B cell (primary cell): ENCODE measurements at regions of chr11 and their contacts with region 1.

Region 1: DNA sequence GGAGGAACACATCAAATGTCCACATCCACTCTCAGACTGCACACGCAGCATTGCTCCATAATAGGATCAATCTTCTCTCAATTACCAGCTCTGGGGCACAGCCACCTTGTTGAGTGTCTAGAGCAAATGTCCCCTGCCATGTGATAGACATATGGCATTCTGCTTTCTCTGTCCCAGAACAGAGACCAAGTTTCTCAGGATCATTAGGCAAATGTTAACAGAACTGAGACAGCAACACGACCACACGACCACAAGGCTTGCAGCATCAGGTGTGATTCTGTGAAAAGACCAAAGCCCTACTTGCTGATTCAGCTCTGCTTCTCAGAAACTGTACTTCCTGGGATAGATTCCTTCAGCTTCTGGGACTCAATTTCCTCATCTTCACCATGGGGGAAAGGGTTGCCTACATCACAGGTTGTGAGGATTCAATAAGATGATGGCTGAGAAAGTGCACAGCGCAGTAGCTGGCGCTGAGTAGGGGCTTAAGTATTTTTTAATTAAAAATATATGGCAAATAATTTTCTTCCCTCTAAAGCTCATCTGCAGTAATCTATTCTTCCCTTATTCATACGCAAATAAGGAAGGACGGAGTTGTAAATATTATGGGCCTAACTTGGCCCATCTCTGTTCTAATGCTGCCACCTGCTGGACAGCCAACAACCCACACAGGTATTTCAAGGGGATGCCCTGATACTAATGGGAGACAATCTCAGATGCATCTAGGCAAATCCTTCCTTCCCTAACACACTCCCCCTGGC is 54.3 kb upstream of the USP47 start:
- DNase-seq: peak; percentile 77
- ATAC-seq: peak; percentile 68
- H3K4me3 ChIP-seq: no peak overlapping the region
- H3K4me3 Mint-ChIP-seq: no peak overlapping the region
- H3K27ac ChIP-seq: no peak overlapping the region
- H3K27ac Mint-ChIP-seq: no peak overlapping the region
- H3K4me1 ChIP-seq: no peaks in the 10 kb centered on the region
- H3K4me1 Mint-ChIP-seq: no peaks in the 10 kb centered on the region
- H3K27me3 ChIP-seq: peaks cover 0 to 10% (median 3%) of the 10 kb centered on the region in 4 experiments
- H3K27me3 Mint-ChIP-seq: peaks cover 28% of the 10 kb centered on the region
- CTCF ChIP-seq: peak; percentile 95

Region 2: GRCh38 chr11:10770626-10771254 is 1016.7 kb before region 1 on chr11:
- CTCF ChIA-PET with region 1: interaction called, 13 read pairs
- POLR2A ChIA-PET with region 1: no interaction called
- intact Hi-C with region 1: loop called (anchors 5 kb)
- DNase-seq: peak; percentile 39
- ATAC-seq: no peak
- H3K4me3 ChIP-seq: no peak overlapping the region
- H3K4me3 Mint-ChIP-seq: no peak overlapping the region
- H3K27ac ChIP-seq: no peak overlapping the region
- H3K27ac Mint-ChIP-seq: no peak overlapping the region
- H3K4me1 ChIP-seq: no peaks in the 10 kb centered on the region
- H3K4me1 Mint-ChIP-seq: no peaks in the 10 kb centered on the region
- H3K27me3 ChIP-seq: no peaks in the 10 kb centered on the region
- H3K27me3 Mint-ChIP-seq: no peaks in the 10 kb centered on the region
- CTCF ChIP-seq: peak; percentile 66

Region 3: GRCh38 chr11:10792398-10792975 is 995.0 kb before region 1 on chr11:
- CTCF ChIA-PET with region 1: interaction called, 44 read pairs
- POLR2A ChIA-PET with region 1: no interaction called
- intact Hi-C with region 1: no loop called
- DNase-seq: peak; percentile 86
- ATAC-seq: peak; percentile 97
- H3K4me3 ChIP-seq: peak overlapping the region in 2 of 5 experiments; percentile 17 to 32
- H3K4me3 Mint-ChIP-seq: peak overlapping the region; percentile 17
- H3K27ac ChIP-seq: no peak overlapping the region
- H3K27ac Mint-ChIP-seq: no peak overlapping the region
- H3K4me1 ChIP-seq: peaks cover 13 to 20% of the 10 kb centered on the region in 2 donors
- H3K4me1 Mint-ChIP-seq: peaks cover 21% of the 10 kb centered on the region
- H3K27me3 ChIP-seq: no peaks in the 10 kb centered on the region
- H3K27me3 Mint-ChIP-seq: no peaks in the 10 kb centered on the region
- CTCF ChIP-seq: peak; percentile 90

Region 4: DNA sequence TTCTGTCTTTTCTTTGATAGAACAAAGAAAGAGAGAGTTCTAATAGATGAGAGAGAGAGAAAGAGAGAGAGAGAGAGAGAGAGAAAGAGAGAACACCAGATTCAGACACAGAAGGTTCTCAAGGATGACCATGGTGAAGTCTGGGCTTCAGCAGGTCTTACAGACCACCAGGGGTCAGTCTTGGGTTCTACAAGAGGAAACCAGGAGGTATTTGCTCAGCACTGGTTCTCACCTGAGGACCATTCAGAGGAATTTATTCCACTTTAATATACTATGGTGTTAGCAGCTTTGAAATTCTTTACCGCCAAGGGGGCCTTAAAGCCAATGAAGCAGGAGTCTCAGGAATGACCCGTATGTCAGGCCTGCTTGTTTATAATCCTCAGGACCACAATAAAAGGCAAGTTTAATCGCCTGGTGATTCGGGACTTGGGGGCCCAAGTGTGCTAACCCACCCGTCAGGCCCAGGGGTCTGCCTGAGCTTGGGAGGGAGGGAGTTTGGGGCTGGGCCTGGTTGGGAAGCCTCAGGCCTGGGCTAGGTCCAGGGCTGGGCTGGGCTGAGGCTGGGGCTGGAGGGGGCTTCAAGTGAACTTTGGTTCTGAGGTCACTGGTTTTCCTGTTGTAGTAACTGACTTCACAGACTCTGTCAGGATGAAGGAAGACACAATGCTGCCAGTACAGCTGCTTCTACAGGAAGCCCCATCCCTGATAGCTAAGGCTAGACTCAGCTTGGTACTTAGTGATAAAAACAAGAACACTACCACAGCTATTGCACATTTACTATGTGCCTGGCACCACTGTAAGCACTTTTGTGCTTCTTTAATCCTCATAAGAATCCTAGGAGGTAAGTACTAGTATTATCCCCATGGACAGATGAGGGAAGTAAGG is 750.4 kb before region 1 on chr11:
- CTCF ChIA-PET with region 1: interaction called, 70 read pairs
- POLR2A ChIA-PET with region 1: no interaction called
- intact Hi-C with region 1: loop called (anchors 1 kb)
- DNase-seq: peak; percentile 57
- ATAC-seq: peak; percentile 31
- H3K4me3 ChIP-seq: no peak overlapping the region
- H3K4me3 Mint-ChIP-seq: no peak overlapping the region
- H3K27ac ChIP-seq: no peak overlapping the region
- H3K27ac Mint-ChIP-seq: no peak overlapping the region
- H3K4me1 ChIP-seq: no peaks in the 10 kb centered on the region
- H3K4me1 Mint-ChIP-seq: no peaks in the 10 kb centered on the region
- H3K27me3 ChIP-seq: peaks cover 0 to 16% (median 3%) of the 10 kb centered on the region in 4 experiments
- H3K27me3 Mint-ChIP-seq: peaks cover 35% of the 10 kb centered on the region
- CTCF ChIP-seq: peak; percentile 69

Region 5: DNA sequence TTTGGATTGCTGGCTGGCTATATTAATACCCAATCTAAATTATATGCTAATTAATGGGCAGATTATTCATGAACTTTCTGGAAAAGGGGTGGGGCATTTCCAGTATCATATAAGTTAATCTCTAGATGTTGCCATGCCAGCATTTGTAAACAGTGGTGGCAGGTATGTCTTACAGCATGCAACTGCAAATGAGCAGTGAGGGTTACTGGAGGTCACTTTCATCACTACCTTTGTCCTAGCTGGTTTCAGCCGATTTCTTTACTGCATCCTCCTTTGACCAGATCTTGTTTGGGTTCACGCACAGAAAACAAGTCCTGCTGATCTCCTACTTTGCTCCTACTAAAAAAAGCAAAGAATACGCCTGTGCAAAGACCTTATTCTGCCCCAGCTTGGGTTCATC is 34.8 kb before region 1 on chr11:
- CTCF ChIA-PET with region 1: no interaction called
- POLR2A ChIA-PET with region 1: no interaction called
- intact Hi-C with region 1: no loop called
- DNase-seq: no peak
- ATAC-seq: no peak
- H3K4me3 ChIP-seq: no peak overlapping the region
- H3K4me3 Mint-ChIP-seq: no peak overlapping the region
- H3K27ac ChIP-seq: no peak overlapping the region
- H3K27ac Mint-ChIP-seq: no peak overlapping the region
- H3K4me1 ChIP-seq: no peaks in the 10 kb centered on the region
- H3K4me1 Mint-ChIP-seq: no peaks in the 10 kb centered on the region
- H3K27me3 ChIP-seq: peaks cover 0 to 4% (median 0%) of the 10 kb centered on the region in 4 experiments
- H3K27me3 Mint-ChIP-seq: peaks cover 11% of the 10 kb centered on the region
- CTCF ChIP-seq: no peak

Region 6: DNA sequence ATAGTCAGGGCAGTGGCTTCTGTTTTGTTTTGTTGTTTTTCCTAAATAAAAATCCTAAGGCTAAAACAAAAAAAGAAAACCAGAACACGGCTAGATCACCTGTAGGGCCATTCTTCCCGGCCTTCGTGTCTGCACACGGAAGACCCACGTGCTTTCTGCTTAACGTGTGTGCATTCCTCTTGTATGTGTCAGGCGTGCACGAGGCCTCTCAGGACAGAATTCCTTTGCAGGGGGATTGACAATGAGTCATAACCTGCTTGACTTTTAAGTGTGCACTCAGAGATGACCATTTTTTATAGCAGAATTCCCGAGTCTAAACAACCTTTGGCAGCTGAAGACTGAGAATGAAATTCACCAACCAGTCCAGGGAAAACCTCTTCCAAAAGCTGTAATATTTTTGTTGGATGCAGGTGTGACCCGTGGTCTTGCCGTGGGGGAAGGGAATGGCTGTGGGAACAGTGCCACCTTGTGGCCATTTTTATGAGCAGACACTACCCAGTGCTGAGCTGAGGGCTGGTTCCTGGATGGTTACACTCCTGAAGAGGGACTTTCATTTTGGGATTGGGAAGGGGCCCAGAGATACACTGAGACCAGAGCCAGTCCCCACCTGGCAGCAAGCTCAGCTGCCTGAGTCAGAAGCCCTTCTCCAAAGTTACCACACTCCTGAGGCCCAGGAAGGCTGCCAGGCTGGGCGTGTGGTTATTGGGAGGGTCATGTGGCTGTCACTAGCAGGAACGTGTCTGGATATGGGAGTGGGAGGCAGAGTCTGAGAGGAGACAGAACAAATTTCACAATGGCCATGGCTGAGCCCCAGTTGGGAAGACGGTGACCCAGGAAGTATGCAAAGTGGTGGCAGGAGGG is 256.7 kb after region 1 on chr11:
- CTCF ChIA-PET with region 1: interaction called, 11 read pairs
- POLR2A ChIA-PET with region 1: no interaction called
- intact Hi-C with region 1: no loop called
- DNase-seq: peak; percentile 71
- ATAC-seq: peak; percentile 69
- H3K4me3 ChIP-seq: no peak overlapping the region
- H3K4me3 Mint-ChIP-seq: no peak overlapping the region
- H3K27ac ChIP-seq: no peak overlapping the region
- H3K27ac Mint-ChIP-seq: no peak overlapping the region
- H3K4me1 ChIP-seq: no peaks in the 10 kb centered on the region
- H3K4me1 Mint-ChIP-seq: no peaks in the 10 kb centered on the region
- H3K27me3 ChIP-seq: no peaks in the 10 kb centered on the region
- H3K27me3 Mint-ChIP-seq: peaks cover 8% of the 10 kb centered on the region
- CTCF ChIP-seq: peak; percentile 93